ENCODE measurements at regions of chr17 and their contacts with region 1.

Region 1: DNA sequence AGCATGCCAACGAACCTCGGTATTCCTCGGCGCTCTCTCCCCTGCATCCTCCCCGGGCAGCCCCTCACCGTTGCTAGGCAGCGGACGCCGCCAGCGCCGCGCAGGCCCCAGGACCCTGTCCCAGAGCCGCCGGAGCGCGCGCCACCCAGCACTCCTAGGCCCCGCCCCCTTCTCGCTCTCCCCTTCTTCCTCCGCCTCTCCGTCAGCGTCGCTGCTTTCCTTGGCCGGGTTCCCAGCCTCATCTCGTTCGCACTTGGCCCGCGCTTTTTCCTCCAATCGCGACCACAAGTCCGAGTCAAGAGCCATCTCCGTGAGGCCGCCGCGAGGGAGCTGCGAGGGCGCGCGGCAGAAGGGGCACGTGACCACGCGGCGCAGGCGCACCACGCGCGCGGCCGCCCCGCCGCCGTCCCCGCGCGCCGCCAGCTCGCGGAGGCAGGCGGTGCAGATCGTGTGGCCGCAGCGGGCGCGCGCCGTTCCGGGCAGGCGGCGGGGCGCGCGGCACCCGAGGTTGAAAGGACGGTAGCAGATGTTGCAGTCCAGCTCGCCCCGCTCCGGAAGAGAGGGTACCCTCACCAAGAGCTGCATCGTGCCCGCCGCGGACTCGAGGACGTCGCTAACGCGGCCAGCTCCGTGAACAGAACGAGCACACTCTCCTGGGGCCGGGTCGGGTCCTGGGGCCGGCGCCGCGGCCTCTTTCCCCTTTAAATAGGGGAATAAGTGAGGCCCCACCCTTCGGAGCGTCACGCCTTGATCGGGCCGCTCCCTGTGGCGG is at the start of gene RNF227:
- H3K4me3 ChIP-seq: peak within 1 kb of the TSS; percentile 58
- H3K27ac ChIP-seq: peak within 1 kb of the TSS; percentile 90
- H3K4me1 ChIP-seq: peaks cover 14% of the 10 kb centered on the region
- CTCF ChIP-seq: no peak; the same call in 1 of the 2 replicates

Region 2: DNA sequence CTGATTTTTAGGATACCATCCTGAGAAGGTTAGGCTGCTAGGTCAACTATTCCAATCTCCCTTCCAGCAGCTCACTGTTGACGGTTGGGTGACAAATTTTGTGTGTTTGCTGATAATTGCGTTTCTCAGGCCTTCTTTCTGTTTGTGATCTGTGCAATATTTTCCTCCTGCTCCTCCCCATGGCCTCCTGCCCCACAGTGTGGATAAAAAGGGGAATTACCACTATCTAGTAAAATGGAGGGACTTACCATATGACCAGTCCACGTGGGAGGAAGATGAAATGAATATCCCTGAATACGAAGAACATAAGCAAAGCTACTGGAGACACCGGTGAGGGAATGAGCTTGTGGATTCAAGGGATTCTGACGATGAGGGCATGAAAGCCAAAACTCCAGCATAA is 18.0 kb before region 1 on chr17:
- CTCF ChIA-PET with region 1: interaction called, 14 read pairs
- POLR2A ChIA-PET with region 1: interaction called, 7 read pairs
- H3K4me3 ChIP-seq: no peak overlapping the region
- H3K27ac ChIP-seq: no peak overlapping the region
- H3K4me1 ChIP-seq: peaks cover under 1% of the 10 kb centered on the region; the same call in 1 of the 2 replicates
- CTCF ChIP-seq: peak; percentile 81

Region 3: GRCh38 chr17:7903154-7904103 is 12.4 kb before region 1 on chr17:
- CTCF ChIA-PET with region 1: interaction called, 14 read pairs
- POLR2A ChIA-PET with region 1: interaction called, 7 read pairs
- H3K4me3 ChIP-seq: no peak overlapping the region
- H3K27ac ChIP-seq: peak overlapping the region; percentile 60
- H3K4me1 ChIP-seq: peaks cover 10% of the 10 kb centered on the region; the same call in 1 of the 2 replicates
- CTCF ChIP-seq: no peak

Region 4: GRCh38 chr17:7982666-7983065 is 66.9 kb after region 1 on chr17:
- CTCF ChIA-PET with region 1: interaction called, 92 read pairs
- POLR2A ChIA-PET with region 1: no interaction called
- H3K4me3 ChIP-seq: no peak overlapping the region
- H3K27ac ChIP-seq: no peak overlapping the region
- H3K4me1 ChIP-seq: no peaks in the 10 kb centered on the region
- CTCF ChIP-seq: no peak

Measured in HEK293 (cell line).